ENCODE measurements at regions of chr2 and their contacts with region 1.

Region 1: DNA sequence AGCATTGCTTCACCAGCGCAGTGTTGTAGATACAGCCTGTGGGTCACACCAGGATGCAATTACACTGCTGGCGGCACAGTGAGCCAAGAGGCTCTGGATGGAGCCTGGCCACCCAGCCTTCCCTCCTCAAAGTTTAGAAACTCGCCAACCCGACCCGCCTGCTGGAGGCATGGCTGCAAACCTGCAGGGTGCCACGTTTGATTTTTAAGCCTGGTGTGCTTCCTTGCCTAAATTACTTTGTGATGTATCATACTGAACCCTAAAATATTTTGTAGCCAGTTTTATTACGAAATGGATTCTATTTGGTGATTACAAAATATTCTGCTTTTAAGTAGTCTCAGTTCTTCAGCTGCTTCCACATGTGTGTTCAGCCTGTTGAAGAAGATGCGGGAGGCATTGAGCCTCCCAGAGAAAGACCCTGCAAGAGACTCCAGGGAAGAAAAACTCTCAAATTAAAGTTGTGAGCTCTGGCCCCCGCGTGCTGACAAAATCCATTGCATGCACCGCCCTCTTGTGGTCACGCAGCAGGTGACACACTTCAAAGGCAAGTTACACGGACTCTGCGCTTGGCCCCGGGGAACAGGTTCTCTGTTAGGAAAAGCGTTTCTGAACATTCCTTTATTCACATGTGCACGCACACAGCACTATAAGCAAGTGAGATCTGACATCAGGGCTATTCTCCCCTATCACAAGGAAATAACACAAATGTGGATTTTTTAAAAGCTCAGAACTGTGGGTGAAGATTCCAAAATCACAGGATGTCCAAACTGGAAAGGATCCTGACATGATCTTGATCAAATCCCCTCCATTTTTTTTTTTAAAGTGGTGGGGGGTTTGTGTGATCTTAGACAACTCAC is 63.0 kb upstream of the TWIST2 start:
- DNase-seq: no peak
- H3K4me3 ChIP-seq: no peak overlapping the region
- H3K27ac ChIP-seq: peak overlapping the region in 3 of 4 donors; percentile 38 to 78 (median 71)
- H3K4me1 ChIP-seq: peaks cover 0 to 5% (median 3%) of the 10 kb centered on the region in 3 donors
- H3K27me3 ChIP-seq: no peaks in the 10 kb centered on the region
- CTCF ChIP-seq: peak; percentile 73 to 90 (median 80)
- POLR2A ChIP-seq: no peak

Region 2: DNA sequence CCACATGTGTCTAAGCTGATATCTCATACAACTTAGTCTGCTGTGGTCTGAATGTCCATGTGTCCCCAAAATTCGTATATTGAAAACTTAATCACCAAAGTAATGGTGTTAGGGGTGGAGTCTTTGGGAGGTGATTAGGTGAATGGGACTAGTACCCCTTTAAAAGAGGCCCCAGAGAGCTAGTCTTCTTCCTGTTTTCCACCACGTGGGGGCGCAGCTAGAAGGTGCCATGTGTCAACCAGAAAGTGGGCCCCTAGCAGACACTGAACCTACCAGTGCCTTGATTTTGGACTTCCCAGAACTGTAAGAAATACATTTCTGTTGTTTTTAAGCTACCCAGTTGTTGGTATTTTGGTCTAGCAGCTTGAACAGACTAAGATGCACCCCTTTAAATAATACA is 271.6 kb before region 1 on chr2:
- intact Hi-C with region 1: loop called (anchors 10 kb)
- DNase-seq: no peak
- H3K4me3 ChIP-seq: no peak overlapping the region
- H3K27ac ChIP-seq: no peak overlapping the region
- H3K4me1 ChIP-seq: no peaks in the 10 kb centered on the region
- H3K27me3 ChIP-seq: peaks cover 0 to 6% (median 0%) of the 10 kb centered on the region in 4 donors
- CTCF ChIP-seq: peak in 4 of 6 experiments; percentile 30 to 61 (median 40)
- POLR2A ChIP-seq: no peak

Measured in esophagus squamous epithelium (tissue), 5 donors.